IMR-90 (cell line): ENCODE measurements at regions of chr5 and their contacts with region 1.

Region 1: GRCh38 chr5:36875790-36876388 is 680 bp upstream of the NIPBL start:
- DNase-seq: peak; percentile 78
- ATAC-seq: peak; percentile 76
- H3K4me3 ChIP-seq: peak overlapping the region; percentile 83
- H3K27ac ChIP-seq: peak overlapping the region; percentile 98
- H3K4me1 ChIP-seq: no peaks in the 10 kb centered on the region
- H3K27me3 ChIP-seq: no peaks in the 10 kb centered on the region
- CTCF ChIP-seq: peak; percentile 59
- POLR2A ChIP-seq: no peak
- RAD21 ChIP-seq: peak; percentile 31

Region 2: DNA sequence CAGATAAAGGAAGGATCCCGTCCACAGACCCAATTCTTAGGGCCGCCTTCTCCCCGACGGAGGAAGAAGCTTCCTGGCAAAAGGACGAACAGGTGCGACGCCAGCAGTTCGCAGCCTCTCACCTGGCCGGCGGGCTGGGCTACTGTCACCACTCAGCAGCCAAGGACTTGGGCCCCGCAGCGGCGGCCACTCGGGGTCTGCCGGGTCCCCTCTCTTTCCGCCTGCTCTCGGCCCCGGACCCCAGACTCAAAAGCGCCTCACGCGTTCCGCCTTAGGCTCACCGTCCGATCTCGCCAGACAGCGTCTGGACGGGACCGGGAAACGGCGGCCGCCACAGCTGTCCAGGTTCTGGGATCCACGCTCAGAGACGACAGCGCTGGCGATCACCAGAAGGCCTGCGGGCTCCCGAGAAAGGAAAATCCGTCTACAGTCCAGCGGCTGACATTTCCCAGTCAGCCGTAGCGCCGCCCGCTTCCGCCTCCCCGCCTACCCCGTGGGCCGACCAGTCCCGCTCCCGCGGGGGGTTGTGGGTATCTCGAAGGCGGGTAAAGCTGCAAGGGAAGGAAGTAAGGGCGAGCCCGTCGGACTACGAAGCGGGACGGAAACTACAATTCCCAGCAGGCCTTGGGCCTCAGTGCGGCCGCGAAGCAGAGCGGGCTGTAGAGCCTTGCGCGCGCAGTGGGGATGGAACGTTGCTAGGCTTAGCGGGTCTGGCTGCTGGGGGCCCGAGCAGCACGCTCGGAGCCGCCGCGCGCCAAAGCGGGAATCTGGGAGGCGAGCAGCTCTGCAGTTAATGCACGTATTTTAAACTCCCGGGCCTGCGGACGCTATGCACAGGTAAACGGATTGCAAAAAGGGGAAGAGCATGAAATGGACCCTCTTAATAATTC is 724.2 kb before region 1 on chr5 and contains the starts of genes LMBRD2 and SKP2:
- CTCF ChIA-PET with region 1: no interaction called
- POLR2A ChIA-PET with region 1: no interaction called
- dilution Hi-C with region 1: no loop called
- in situ Hi-C with region 1: no loop called
- intact Hi-C with region 1: loop called (anchors 5 kb)
- DNase-seq: peak; percentile 98
- ATAC-seq: peak; percentile 94
- H3K4me3 ChIP-seq: peak within 1 kb of the TSS; percentile 79
- H3K27ac ChIP-seq: peak within 1 kb of the TSS; percentile 87
- H3K4me1 ChIP-seq: peaks cover 14% of the 10 kb centered on the region
- H3K27me3 ChIP-seq: no peaks in the 10 kb centered on the region
- CTCF ChIP-seq: no peak
- POLR2A ChIP-seq: peak; percentile 28; the same call in 1 of the 2 replicates
- RAD21 ChIP-seq: no peak
- total RNA-seq, gene LMBRD2: 5.2 and 11.4 TPM in 2 replicates
- total RNA-seq, gene SKP2: 72.5 and 92.1 TPM in 2 replicates

Region 3: DNA sequence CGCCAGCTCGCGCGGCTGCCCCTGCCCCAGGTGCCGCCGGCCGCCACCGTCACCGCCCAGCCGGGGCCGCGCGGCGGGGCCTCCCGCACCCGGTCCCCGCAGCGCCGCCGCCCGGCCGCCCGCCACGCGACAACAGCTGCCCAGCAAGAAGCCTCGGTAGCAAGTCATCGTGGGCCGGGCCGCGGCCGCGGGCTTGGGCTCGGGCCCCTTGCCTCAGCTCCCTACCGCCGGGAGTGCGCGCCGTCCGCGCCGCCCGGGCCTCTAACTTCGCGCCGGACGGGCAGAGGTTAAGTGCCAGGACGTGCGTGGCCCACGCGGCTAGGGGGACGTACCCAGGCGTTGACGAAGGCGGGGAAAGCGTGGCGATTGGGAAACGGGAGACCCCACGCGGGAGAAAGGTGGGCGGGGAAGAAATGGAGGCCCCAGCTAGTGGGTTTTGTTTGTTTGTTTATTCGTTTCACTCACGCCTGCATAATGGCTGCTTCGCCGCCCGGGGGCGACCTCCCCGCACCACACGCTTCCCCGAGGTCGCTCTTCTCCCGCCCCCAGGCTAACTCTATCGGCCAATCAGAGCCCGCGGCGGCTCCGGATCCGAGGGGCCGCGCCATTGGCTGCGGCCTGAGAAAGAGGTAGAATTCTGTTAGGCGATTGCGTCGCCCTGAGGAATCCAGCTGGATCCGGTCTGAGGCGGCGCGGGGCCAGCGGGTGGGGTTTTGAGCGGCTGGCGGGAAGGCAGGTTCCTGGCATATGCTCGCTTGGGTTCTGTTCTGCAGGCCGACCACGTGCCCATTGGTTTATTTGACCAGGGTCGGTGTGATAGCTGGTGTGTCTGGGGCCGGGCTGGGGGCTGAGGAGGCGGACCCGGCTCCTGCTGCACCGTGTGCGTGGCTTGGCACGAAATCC is 634.0 kb before region 1 on chr5 and contains the start of gene NADK2:
- CTCF ChIA-PET with region 1: no interaction called
- POLR2A ChIA-PET with region 1: no interaction called
- dilution Hi-C with region 1: no loop called
- in situ Hi-C with region 1: no loop called
- intact Hi-C with region 1: loop called (anchors 10 kb)
- DNase-seq: peak; percentile 92
- ATAC-seq: peak; percentile 86
- H3K4me3 ChIP-seq: peak within 1 kb of the TSS; percentile 85
- H3K27ac ChIP-seq: peak within 1 kb of the TSS; percentile 91
- H3K4me1 ChIP-seq: peaks cover 4% of the 10 kb centered on the region
- H3K27me3 ChIP-seq: no peaks in the 10 kb centered on the region
- CTCF ChIP-seq: peak; percentile 65
- POLR2A ChIP-seq: peak; percentile 81
- RAD21 ChIP-seq: peak; percentile 31; the same call in 1 of the 2 replicates
- total RNA-seq, gene NADK2: 17.4 and 21.1 TPM in 2 replicates

Region 4: GRCh38 chr5:36897616-36898015 is 21.7 kb after region 1 on chr5:
- CTCF ChIA-PET with region 1: no interaction called
- POLR2A ChIA-PET with region 1: no interaction called
- dilution Hi-C with region 1: no loop called
- in situ Hi-C with region 1: no loop called
- intact Hi-C with region 1: loop called (anchors 2 kb)
- DNase-seq: peak; percentile 80
- ATAC-seq: peak; percentile 90
- H3K4me3 ChIP-seq: no peak overlapping the region
- H3K27ac ChIP-seq: no peak overlapping the region
- H3K4me1 ChIP-seq: no peaks in the 10 kb centered on the region
- H3K27me3 ChIP-seq: no peaks in the 10 kb centered on the region
- CTCF ChIP-seq: no peak
- POLR2A ChIP-seq: no peak
- RAD21 ChIP-seq: no peak

Region 5: GRCh38 chr5:36928947-36929346 is 53.1 kb after region 1 on chr5:
- CTCF ChIA-PET with region 1: no interaction called
- POLR2A ChIA-PET with region 1: no interaction called
- dilution Hi-C with region 1: no loop called
- in situ Hi-C with region 1: no loop called
- intact Hi-C with region 1: loop called (anchors 5 kb)
- DNase-seq: peak; percentile 86
- ATAC-seq: peak; percentile 85
- H3K4me3 ChIP-seq: no peak overlapping the region
- H3K27ac ChIP-seq: no peak overlapping the region
- H3K4me1 ChIP-seq: 0 out of 2 replicates have a peak, but pooled peaks cover 2% of the 10 kb centered on the region
- H3K27me3 ChIP-seq: no peaks in the 10 kb centered on the region
- CTCF ChIP-seq: no peak
- POLR2A ChIP-seq: no peak
- RAD21 ChIP-seq: no peak

Region 6: DNA sequence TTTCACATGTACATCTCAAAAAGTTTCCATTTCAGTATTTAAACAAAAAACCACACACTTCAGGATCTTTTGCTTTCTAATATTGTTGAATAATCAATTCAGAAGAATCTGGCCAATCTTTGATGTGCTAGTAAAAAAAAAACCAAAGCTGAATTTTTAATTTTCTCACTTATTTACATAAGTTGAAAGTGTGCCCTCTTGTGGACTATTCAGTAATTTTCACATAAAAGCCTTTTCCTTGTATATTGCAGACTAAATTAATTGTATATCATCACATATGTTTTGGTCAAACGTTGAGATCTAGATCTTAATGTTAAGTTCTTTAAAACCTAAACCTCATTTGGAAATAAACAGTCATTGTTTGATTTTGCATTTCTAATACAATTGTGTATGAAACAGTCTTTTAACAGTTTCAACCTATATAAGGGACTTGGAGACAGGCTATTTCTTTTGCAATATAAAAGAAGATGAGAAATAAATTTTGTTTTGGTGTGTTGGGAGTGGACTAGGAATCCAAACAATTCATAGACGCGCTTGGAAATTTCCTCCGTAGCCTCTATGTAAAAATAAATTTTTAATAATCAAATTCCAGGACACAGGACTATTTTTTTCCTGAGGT is 68.8 kb after region 1 on chr5:
- CTCF ChIA-PET with region 1: no interaction called
- POLR2A ChIA-PET with region 1: no interaction called
- dilution Hi-C with region 1: no loop called
- in situ Hi-C with region 1: loop called (anchors 5 kb)
- intact Hi-C with region 1: loop called (anchors 1 kb)
- DNase-seq: peak; percentile 76
- ATAC-seq: no peak
- H3K4me3 ChIP-seq: no peak overlapping the region
- H3K27ac ChIP-seq: no peak overlapping the region
- H3K4me1 ChIP-seq: no peaks in the 10 kb centered on the region
- H3K27me3 ChIP-seq: no peaks in the 10 kb centered on the region
- CTCF ChIP-seq: peak; percentile 57
- POLR2A ChIP-seq: no peak
- RAD21 ChIP-seq: peak; percentile 35; the same call in 1 of the 2 replicates

Region 7: GRCh38 chr5:37005946-37006540 is 130.2 kb after region 1 on chr5:
- CTCF ChIA-PET with region 1: interaction called, 3 read pairs
- POLR2A ChIA-PET with region 1: interaction called, 3 read pairs
- dilution Hi-C with region 1: no loop called
- in situ Hi-C with region 1: no loop called
- intact Hi-C with region 1: loop called (anchors 5 kb)
- DNase-seq: peak; percentile 39
- ATAC-seq: peak; percentile 59; the same call in 1 of the 2 replicates
- H3K4me3 ChIP-seq: no peak overlapping the region
- H3K27ac ChIP-seq: no peak overlapping the region
- H3K4me1 ChIP-seq: peaks cover 2% of the 10 kb centered on the region
- H3K27me3 ChIP-seq: no peaks in the 10 kb centered on the region
- CTCF ChIP-seq: peak; percentile 60
- POLR2A ChIP-seq: no peak
- RAD21 ChIP-seq: peak; percentile 49

Region 8: GRCh38 chr5:37940931-37941623 is 1065.2 kb after region 1 on chr5:
- CTCF ChIA-PET with region 1: no interaction called
- POLR2A ChIA-PET with region 1: no interaction called
- dilution Hi-C with region 1: no loop called
- in situ Hi-C with region 1: no loop called
- intact Hi-C with region 1: no loop called
- DNase-seq: no peak
- ATAC-seq: no peak
- H3K4me3 ChIP-seq: no peak overlapping the region
- H3K27ac ChIP-seq: no peak overlapping the region
- H3K4me1 ChIP-seq: no peaks in the 10 kb centered on the region
- H3K27me3 ChIP-seq: peaks cover 12% of the 10 kb centered on the region
- CTCF ChIP-seq: no peak
- POLR2A ChIP-seq: no peak
- RAD21 ChIP-seq: no peak